Activated CD4-positive, alpha-beta memory T cell treated with anti-CD3 and anti-CD28 coated beads for 36 hours (primary cell): ENCODE measurements at regions of chr12 and their contacts with region 1.

Region 1: DNA sequence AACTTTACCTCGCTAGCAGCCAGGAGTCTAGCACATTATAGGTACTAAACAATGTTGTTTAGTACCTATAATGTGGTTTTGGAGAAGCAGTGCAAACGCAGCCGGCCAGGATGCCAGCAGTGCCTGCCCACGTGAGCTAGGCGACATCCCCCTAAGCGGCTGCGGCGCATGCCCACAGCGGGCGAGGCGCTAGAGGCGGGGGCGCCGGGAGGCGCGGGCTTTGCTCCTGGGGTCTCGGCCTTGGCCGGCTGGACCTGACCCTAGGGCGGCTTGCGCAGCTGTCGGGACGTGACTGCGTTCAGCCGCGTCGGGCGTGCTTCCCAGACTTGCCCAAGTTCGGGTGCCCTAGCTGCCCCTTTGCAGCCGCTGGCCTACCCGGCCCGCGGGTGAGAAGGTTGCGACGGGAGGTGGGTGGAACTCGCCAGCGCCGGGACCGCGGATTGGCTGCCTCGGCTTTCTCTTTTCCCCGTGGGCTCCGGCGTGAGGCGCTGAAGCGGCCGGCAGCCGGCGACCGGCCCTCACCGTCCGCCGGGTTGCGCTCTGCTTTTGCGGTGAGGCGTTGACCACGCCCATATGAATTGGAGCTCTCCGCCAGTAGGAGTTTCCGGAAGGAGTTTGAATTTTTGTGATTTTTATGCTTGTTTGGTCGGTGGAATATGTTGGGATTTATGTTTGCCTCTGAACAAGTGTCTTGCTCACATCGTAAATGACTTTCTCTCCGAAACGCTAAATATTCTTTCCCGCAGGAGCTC is at the start of gene TMEM19:
- DNase-seq: peak; percentile 87
- H3K4me3 Mint-ChIP-seq: peak within 1 kb of the TSS; percentile 96
- H3K27ac Mint-ChIP-seq: peak within 1 kb of the TSS; percentile 92
- H3K4me1 Mint-ChIP-seq: peaks cover 16% of the 10 kb centered on the region
- H3K27me3 Mint-ChIP-seq: no peaks in the 10 kb centered on the region
- total RNA-seq, gene TMEM19: 10.8 to 11.7 TPM

Region 2: GRCh38 chr12:71642264-71642663 is 43.8 kb before region 1 on chr12:
- CTCF ChIA-PET with region 1: interaction called, 14 read pairs
- POLR2A ChIA-PET with region 1: interaction called, 4 read pairs
- intact Hi-C with region 1: loop called (anchors 1 kb)
- DNase-seq: no peak
- H3K4me3 Mint-ChIP-seq: no peak overlapping the region
- H3K27ac Mint-ChIP-seq: peak overlapping the region; percentile 65
- H3K4me1 Mint-ChIP-seq: peaks cover 55% of the 10 kb centered on the region
- H3K27me3 Mint-ChIP-seq: no peaks in the 10 kb centered on the region

Region 3: DNA sequence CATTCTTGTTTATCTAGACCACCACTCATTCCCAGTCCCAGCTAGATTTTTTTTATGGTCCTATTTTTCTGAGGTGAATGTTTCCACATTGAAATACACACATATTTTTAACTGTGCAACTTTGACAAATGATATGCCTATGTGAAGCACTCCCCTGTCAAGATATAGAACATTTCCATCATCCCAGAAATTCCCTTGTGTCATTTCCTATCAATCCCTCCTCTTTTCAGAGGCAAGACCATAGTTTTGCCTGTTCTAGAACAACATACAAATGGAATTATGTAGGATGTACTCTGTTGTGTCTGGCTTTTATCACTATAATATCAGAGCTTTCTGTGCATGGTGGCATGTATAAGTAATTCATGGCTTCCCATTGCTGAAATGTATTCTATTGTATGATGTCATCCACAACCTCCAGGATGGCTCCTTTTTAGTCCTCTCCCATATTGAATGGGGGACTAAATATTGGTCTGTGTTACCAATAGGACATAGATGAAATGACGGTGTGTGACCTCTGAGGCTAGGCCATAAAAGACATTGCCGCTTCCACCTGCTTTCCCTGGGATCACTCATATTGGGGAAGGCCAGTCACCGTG is 32.6 kb after region 1 on chr12:
- CTCF ChIA-PET with region 1: no interaction called
- POLR2A ChIA-PET with region 1: no interaction called
- intact Hi-C with region 1: no loop called
- DNase-seq: no peak
- H3K4me3 Mint-ChIP-seq: no peak overlapping the region
- H3K27ac Mint-ChIP-seq: no peak overlapping the region
- H3K4me1 Mint-ChIP-seq: no peaks in the 10 kb centered on the region
- H3K27me3 Mint-ChIP-seq: no peaks in the 10 kb centered on the region